Activated naive CD4-positive, alpha-beta T cell treated with anti-CD3 and anti-CD28 coated beads for 36 hours (primary cell): ENCODE measurements at regions of chr11 and their contacts with region 1.

Region 1: GRCh38 chr11:128157423-128158298 is 429.7 kb downstream of the ETS1 start:
- DNase-seq: peak; percentile 74
- H3K4me3 Mint-ChIP-seq: peak overlapping the region; percentile 64
- H3K27ac Mint-ChIP-seq: peak overlapping the region; percentile 82
- H3K4me1 Mint-ChIP-seq: peaks cover 5% of the 10 kb centered on the region
- H3K27me3 Mint-ChIP-seq: no peaks in the 10 kb centered on the region

Region 2: DNA sequence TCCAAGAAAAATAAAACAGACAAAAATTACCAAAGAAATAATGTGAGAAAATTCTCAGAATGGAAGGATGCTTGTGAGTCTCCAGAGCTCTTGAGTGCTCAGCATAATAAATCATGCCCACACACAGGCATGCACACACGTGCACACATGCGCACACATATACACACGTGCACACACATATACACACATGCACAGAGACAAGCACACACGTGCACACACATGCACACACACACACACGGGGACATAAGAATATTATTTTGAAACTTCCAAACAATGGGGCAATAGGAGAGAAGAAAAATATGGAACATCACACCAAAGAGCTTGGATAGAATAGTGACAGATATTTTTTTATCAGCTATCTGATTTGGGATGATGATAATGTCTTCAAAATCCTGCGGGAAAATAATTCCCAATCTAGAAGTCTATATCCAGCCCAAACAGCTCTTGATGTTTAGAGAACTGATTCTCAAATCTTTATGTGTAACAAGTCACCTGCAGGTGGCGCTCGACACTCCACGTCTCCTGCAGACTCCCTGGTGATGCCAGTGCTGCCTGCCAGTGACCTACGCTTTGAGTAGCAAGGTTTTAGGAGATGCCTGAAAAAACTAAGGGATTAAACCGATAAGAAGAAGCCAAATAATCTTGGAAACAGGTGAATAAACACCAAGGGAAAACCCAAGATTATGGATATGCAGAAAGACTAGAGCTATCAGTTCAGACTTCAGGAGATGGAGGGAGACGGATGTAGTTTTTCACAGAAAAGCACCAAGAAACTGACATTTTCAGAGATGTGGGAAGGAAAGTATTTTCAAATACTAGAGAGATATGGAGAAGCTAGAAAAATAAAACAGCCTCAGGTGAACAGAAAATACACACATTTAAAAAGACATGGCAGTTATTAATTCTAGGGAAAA is 313.9 kb before region 1 on chr11:
- CTCF ChIA-PET with region 1: interaction called, 3 read pairs
- intact Hi-C with region 1: loop called (anchors 5 kb)
- DNase-seq: peak; percentile 89
- H3K4me3 Mint-ChIP-seq: no peak overlapping the region
- H3K27ac Mint-ChIP-seq: no peak overlapping the region
- H3K4me1 Mint-ChIP-seq: no peaks in the 10 kb centered on the region
- H3K27me3 Mint-ChIP-seq: peaks cover 3% of the 10 kb centered on the region

Region 3: DNA sequence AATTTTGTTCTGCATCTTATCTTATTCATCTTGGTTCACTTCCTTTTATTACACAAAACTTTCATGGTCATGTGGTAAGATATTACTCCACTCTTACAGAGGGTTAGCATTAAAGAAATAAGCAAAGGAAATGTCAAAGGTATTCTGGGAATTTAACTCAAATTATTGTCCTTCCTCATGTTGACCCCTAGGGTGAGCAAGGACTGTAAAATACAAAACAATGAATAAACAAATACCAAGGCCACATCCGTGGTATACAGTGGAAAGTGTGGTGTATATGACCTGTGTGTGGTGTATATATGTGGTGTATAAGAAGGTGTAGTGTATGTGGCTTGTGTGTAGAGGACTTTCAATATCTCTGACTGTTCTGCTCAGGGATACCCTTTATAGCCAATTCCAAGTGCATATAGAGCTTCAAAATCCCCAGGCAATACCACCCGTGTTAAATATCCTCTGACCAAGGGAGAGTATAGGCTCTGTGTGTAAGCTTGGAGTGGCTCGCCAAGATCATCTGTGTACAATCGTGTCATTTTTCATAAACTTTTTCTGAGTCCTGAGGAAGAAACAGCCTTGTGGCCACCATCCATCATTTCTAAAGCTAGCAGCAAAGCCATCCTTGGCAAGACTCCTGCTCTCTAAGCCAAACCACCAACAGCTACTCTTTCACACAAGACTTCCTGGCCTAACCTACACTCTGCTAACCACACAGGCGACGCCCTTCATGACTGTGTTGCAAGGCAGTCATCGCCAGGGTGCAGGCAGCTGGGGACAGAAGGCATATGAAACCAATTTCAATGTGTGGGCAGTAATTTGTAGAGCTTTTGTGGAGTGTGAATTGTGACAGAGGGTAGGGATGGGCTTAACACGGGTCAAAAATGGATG is 118.3 kb before region 1 on chr11:
- CTCF ChIA-PET with region 1: interaction called, 63 read pairs
- intact Hi-C with region 1: no loop called
- DNase-seq: peak; percentile 89
- H3K4me3 Mint-ChIP-seq: peak overlapping the region; percentile 40
- H3K27ac Mint-ChIP-seq: peak overlapping the region; percentile 92
- H3K4me1 Mint-ChIP-seq: peaks cover 47% of the 10 kb centered on the region
- H3K27me3 Mint-ChIP-seq: no peaks in the 10 kb centered on the region

Region 4: GRCh38 chr11:128130052-128130451 is 27.6 kb before region 1 on chr11:
- CTCF ChIA-PET with region 1: interaction called, 23 read pairs
- intact Hi-C with region 1: no loop called
- DNase-seq: no peak
- H3K4me3 Mint-ChIP-seq: no peak overlapping the region
- H3K27ac Mint-ChIP-seq: no peak overlapping the region
- H3K4me1 Mint-ChIP-seq: peaks cover 2% of the 10 kb centered on the region
- H3K27me3 Mint-ChIP-seq: no peaks in the 10 kb centered on the region

Region 5: DNA sequence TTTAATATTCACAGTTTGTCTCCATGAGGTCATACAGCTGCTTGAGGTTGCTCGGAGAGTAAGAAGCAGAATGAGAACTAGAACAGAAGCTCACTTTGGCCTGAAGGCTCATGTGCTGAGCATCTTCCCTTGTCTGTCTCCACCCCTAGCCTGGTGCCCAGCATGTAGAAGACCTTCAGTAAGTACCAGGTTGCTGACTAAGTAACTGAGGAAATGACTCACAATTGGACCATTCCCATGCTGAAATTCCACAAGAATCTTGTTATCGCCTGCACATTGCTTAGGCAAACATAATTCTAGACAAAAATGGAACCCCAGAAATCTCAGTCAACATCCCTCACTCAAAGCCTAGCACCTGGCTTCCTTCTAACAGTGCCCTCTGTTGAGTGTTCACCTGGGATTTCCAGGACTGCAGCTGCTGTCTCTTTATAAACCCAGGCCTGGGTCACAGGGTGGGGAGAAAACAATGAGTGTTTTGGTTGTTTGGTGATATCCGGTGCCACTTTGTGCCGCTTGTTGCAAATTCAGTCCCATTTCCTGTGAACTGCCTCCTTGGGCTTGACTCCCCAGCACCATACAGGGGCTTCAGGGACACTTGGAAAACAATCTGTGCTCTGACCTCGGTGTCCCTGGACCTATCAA is 22.9 kb after region 1 on chr11:
- CTCF ChIA-PET with region 1: interaction called, 15 read pairs
- intact Hi-C with region 1: no loop called
- DNase-seq: no peak
- H3K4me3 Mint-ChIP-seq: no peak overlapping the region
- H3K27ac Mint-ChIP-seq: no peak overlapping the region
- H3K4me1 Mint-ChIP-seq: peaks cover 8% of the 10 kb centered on the region
- H3K27me3 Mint-ChIP-seq: no peaks in the 10 kb centered on the region

Region 6: DNA sequence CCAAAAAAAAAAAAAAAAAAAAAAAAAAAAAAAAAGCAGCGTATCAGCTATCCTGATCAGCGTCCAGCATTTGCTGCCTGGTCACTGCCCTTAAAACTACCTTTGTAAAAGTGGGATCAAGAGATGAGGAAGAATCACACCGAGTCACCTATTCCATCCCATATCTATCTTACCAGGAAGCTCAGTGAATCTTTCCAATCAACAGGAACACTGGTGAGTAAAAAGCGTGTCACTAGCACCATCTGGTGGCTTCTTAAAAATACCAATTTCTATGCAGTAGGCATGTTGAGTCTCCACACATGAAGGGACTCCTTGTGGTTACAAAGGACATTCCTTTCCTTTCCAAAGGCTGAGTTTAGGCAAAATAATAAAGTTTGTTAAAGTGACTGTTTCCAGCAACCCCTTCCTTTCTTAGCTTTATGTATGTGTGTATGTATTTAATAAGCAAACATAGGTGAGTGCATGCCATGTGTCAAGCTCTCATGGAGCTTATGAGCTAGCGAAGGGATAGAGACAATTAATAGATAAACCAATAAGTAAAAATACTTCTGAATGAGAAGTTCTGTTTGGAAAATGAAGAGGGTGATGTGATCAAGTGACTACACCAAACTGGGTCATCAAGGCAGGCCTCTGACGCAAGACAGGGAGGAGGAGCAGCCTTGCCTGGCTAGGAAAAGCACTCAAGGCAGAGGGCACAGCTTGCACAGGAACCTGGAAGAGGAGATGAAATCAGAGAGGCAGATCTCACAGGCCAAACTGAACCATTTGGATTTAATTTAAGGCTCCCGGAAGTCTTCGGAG is 798.9 kb after region 1 on chr11:
- CTCF ChIA-PET with region 1: no interaction called
- intact Hi-C with region 1: loop called (anchors 5 kb)
- DNase-seq: peak; percentile 46
- H3K4me3 Mint-ChIP-seq: no peak overlapping the region
- H3K27ac Mint-ChIP-seq: no peak overlapping the region
- H3K4me1 Mint-ChIP-seq: no peaks in the 10 kb centered on the region
- H3K27me3 Mint-ChIP-seq: peaks cover 3% of the 10 kb centered on the region